ENCODE measurements at regions of chr1 and their contacts with region 1.

Region 1: GRCh38 chr1:43073490-43074230 is 98.4 kb downstream of the EBNA1BP2 start:
- DNase-seq: peak; percentile 70 to 82
- ATAC-seq: peak; percentile 91
- H3K4me3 ChIP-seq: no peak overlapping the region
- H3K27ac ChIP-seq: no peak overlapping the region
- H3K4me1 ChIP-seq: no peaks in the 10 kb centered on the region
- H3K27me3 ChIP-seq: no peaks in the 10 kb centered on the region

Region 2: GRCh38 chr1:42576935-42577334 is 496.7 kb before region 1 on chr1:
- intact Hi-C with region 1: loop called in 1 of 2 experiments (anchors 10 kb)
- DNase-seq: no peak
- ATAC-seq: no peak
- H3K4me3 ChIP-seq: no peak overlapping the region
- H3K27ac ChIP-seq: no peak overlapping the region
- H3K4me1 ChIP-seq: no peaks in the 10 kb centered on the region
- H3K27me3 ChIP-seq: no peaks in the 10 kb centered on the region

Region 3: GRCh38 chr1:42766741-42767509 is 306.7 kb before region 1 on chr1 and contains the starts of genes C1orf50 and P3H1:
- intact Hi-C with region 1: loop called (anchors 5 to 10 kb)
- DNase-seq: peak; percentile 100
- ATAC-seq: peak; percentile 98
- H3K4me3 ChIP-seq: peak within 1 kb of the TSS; percentile 86 to 90
- H3K27ac ChIP-seq: peak within 1 kb of the TSS; percentile 24 to 61
- H3K4me1 ChIP-seq: peaks cover 0 to 4% of the 10 kb centered on the region in 2 donors
- H3K27me3 ChIP-seq: no peaks in the 10 kb centered on the region
- total RNA-seq, gene C1orf50: 3.6 to 8.5 TPM
- total RNA-seq, gene P3H1: 37.7 to 54.6 TPM

Region 4: GRCh38 chr1:42777852-42778251 is 295.8 kb before region 1 on chr1:
- intact Hi-C with region 1: loop called in 1 of 2 experiments (anchors 10 kb)
- DNase-seq: no peak
- ATAC-seq: peak; percentile 69
- H3K4me3 ChIP-seq: no peak overlapping the region
- H3K27ac ChIP-seq: no peak overlapping the region
- H3K4me1 ChIP-seq: no peaks in the 10 kb centered on the region
- H3K27me3 ChIP-seq: no peaks in the 10 kb centered on the region

Region 5: GRCh38 chr1:42807056-42807668 is 266.5 kb before region 1 on chr1:
- intact Hi-C with region 1: no loop called
- DNase-seq: no peak
- ATAC-seq: no peak
- H3K4me3 ChIP-seq: no peak overlapping the region
- H3K27ac ChIP-seq: no peak overlapping the region
- H3K4me1 ChIP-seq: no peaks in the 10 kb centered on the region
- H3K27me3 ChIP-seq: no peaks in the 10 kb centered on the region

Region 6: DNA sequence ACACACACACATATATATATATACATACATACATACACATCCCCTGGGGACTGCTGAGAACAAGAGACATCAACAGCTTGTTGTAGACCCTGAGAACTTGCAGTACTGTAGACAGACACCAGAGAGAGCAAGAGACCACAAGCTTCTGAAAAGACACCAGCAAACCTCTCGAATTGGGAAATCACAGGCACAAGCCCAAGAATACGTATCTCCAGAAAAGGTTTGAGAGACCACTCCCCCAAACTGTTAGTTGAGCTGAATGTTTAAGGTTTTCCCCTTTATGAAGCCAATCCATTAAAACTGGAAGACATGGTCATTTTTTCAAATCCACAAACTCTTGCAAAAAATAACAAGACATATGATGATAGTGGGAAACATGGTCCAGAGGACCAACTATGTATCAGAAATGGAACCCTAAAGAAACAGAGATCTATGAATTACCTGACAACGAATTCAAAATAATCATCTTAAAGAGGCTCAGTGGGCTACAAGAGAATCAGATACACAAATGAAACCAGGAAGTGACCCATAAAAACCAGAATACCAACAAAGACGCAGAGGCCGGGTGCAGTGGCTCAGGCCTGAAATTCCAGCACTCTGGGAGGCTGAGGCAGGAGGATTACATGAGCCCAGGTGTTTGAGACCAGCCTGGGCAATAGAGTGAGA is 160.1 kb before region 1 on chr1:
- intact Hi-C with region 1: loop called (anchors 2 kb)
- DNase-seq: no peak
- ATAC-seq: peak; percentile 74
- H3K4me3 ChIP-seq: peak overlapping the region in 1 of 2 donors; percentile 3
- H3K27ac ChIP-seq: no peak overlapping the region
- H3K4me1 ChIP-seq: no peaks in the 10 kb centered on the region
- H3K27me3 ChIP-seq: no peaks in the 10 kb centered on the region

Region 7: DNA sequence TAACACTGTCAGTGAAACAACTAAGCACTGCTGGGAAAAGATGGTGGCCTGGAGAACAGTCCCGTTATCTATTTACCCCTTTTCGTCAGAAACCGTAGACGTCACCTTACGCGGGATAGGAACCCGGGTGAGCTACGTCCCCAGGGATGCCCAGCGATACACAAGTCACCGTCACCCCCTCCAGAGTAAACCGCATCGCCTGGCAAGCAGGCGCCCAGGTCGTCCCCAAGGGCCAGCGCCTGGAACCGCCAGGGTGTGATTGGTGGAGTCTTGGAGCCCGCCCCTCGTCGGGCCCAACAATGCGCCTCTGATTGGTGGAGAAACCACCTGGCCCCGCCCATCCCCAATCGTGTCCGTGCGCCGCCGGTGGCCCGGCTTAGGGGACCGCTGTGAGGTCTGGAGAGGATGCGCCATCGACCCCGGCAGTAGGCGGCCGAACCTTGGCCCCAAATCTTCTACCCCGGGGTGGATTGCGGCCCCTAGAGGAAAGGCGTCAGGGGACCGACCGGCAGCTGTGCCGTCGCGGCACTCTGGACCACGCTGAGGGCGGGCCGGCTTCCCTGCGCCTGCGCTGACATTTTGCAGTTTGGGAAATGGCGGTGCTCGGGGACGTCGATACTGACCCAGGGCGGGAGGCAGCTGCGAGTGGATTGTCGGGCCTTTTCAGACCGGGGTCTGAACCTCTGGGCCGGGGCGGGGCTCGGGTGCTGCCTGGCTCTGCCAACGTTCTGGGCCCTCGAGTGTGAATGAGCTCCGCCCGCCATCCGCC is 149.4 kb before region 1 on chr1:
- intact Hi-C with region 1: loop called in 1 of 2 experiments (anchors 2 kb)
- DNase-seq: peak; percentile 96 to 98
- ATAC-seq: peak; percentile 98
- H3K4me3 ChIP-seq: peak overlapping the region; percentile 45 to 62
- H3K27ac ChIP-seq: peak overlapping the region; percentile 53 to 87
- H3K4me1 ChIP-seq: no peaks in the 10 kb centered on the region
- H3K27me3 ChIP-seq: no peaks in the 10 kb centered on the region

Region 8: DNA sequence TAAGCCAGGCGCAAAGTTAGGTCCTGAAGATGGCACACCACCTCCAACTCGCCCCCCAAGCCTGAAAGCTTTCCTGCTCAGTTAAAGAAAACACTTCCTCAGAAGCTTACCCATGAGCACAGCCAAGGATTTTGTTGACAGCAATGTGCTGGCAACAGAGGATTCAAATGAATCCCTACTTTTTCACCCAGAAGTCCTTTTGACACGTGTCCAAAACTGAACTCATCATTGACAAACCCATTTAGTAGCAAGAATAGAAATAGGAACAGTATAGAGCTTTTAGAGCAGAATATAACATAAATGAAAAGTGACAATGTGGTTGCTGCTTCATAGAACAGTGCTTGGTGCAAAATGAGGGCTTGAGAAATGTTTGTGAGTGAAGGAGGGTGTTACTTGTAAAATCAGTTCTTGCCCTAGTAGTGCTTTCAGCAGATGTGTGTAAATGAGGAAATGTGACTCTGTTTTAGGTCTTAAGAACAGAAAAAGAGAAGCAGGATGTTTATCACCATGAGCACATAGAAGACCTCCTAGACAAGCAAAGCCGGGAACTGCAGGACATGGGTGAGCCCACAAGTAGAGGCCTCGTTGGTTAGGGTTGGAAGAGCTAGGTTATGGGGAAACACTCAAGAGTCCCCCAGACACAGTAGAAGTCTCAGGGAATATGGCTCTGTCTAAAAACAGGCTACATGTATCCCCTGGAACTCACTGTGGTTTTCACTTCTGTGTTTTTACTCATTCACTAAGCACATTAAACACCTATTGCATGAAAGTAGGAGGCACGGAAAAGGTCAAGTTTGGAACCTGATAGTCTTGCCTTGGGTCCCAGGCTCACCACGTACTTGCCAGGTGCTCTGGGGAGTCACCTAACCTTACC is 147.5 kb after region 1 on chr1:
- intact Hi-C with region 1: no loop called
- DNase-seq: no peak
- ATAC-seq: no peak
- H3K4me3 ChIP-seq: no peak overlapping the region
- H3K27ac ChIP-seq: no peak overlapping the region
- H3K4me1 ChIP-seq: no peaks in the 10 kb centered on the region
- H3K27me3 ChIP-seq: no peaks in the 10 kb centered on the region

Measured in aorta (tissue), 5 donors.